ENCODE measurements at regions of chr5 and their contacts with region 1.

Region 1: GRCh38 chr5:42423285-42424165 is at the start of gene GHR:
- DNase-seq: peak; percentile 84
- H3K4me3 ChIP-seq: peak within 1 kb of the TSS; percentile 49 to 81 (median 58)
- H3K27ac ChIP-seq: no peak within 1 kb of the TSS
- H3K4me1 ChIP-seq: peaks cover 17% of the 10 kb centered on the region
- H3K27me3 ChIP-seq: no peaks in the 10 kb centered on the region
- CTCF ChIP-seq: peak; percentile 48 to 75
- total RNA-seq, gene GHR: 2.8 to 5.5 TPM

Region 2: GRCh38 chr5:41856644-41857491 is 566.7 kb before region 1 on chr5:
- CTCF ChIA-PET with region 1: no interaction called
- dilution Hi-C with region 1: no loop called
- in situ Hi-C with region 1: no loop called
- intact Hi-C with region 1: loop called (anchors 5 kb)
- DNase-seq: peak; percentile 47
- H3K4me3 ChIP-seq: no peak overlapping the region
- H3K27ac ChIP-seq: no peak overlapping the region
- H3K4me1 ChIP-seq: no peaks in the 10 kb centered on the region
- H3K27me3 ChIP-seq: no peaks in the 10 kb centered on the region
- CTCF ChIP-seq: peak; percentile 74 to 78

Region 3: GRCh38 chr5:42377496-42377895 is 46.0 kb before region 1 on chr5:
- CTCF ChIA-PET with region 1: no interaction called
- dilution Hi-C with region 1: no loop called
- in situ Hi-C with region 1: no loop called
- intact Hi-C with region 1: no loop called
- DNase-seq: peak; percentile 6
- H3K4me3 ChIP-seq: no peak overlapping the region
- H3K27ac ChIP-seq: no peak overlapping the region
- H3K4me1 ChIP-seq: no peaks in the 10 kb centered on the region
- H3K27me3 ChIP-seq: no peaks in the 10 kb centered on the region
- CTCF ChIP-seq: no peak

Region 4: DNA sequence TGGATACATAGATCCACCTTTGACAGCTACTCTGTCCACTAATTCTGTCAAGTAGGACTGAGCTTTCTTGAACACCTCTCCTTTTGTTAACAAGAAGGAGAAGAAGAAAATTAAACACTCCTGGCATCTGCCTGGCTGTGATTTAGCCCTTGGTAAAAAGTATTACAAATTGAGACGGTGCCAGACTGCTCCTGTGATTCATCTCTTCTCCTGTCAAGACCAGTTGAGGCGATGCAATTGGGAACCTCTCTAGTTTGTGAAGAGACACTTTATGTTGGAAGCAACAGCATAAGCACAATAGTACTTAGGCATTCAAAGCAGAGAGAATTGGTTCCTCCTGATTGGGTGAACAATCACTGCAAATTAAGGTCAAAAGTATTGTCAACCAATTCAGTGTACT is 72.4 kb after region 1 on chr5:
- CTCF ChIA-PET with region 1: interaction called, 3 read pairs
- dilution Hi-C with region 1: no loop called
- in situ Hi-C with region 1: no loop called
- intact Hi-C with region 1: loop called (anchors 5 kb)
- DNase-seq: peak; percentile 70
- H3K4me3 ChIP-seq: no peak overlapping the region
- H3K27ac ChIP-seq: no peak overlapping the region
- H3K4me1 ChIP-seq: peaks cover 12% of the 10 kb centered on the region
- H3K27me3 ChIP-seq: no peaks in the 10 kb centered on the region
- CTCF ChIP-seq: no peak

Region 5: GRCh38 chr5:42636425-42636824 is 212.9 kb after region 1 on chr5:
- CTCF ChIA-PET with region 1: no interaction called
- dilution Hi-C with region 1: no loop called
- in situ Hi-C with region 1: no loop called
- intact Hi-C with region 1: loop called (anchors 1 kb)
- DNase-seq: peak; percentile 9
- H3K4me3 ChIP-seq: no peak overlapping the region
- H3K27ac ChIP-seq: no peak overlapping the region
- H3K4me1 ChIP-seq: peaks cover 12% of the 10 kb centered on the region
- H3K27me3 ChIP-seq: no peaks in the 10 kb centered on the region
- CTCF ChIP-seq: peak; percentile 37 to 57

Region 6: GRCh38 chr5:42656651-42657015 is 233.1 kb after region 1 on chr5:
- CTCF ChIA-PET with region 1: no interaction called
- dilution Hi-C with region 1: no loop called
- in situ Hi-C with region 1: no loop called
- intact Hi-C with region 1: loop called (anchors 1 kb)
- DNase-seq: peak; percentile 4
- H3K4me3 ChIP-seq: peak overlapping the region; percentile 2 to 64 (median 45)
- H3K27ac ChIP-seq: peak overlapping the region; percentile 53
- H3K4me1 ChIP-seq: peaks cover 10% of the 10 kb centered on the region
- H3K27me3 ChIP-seq: no peaks in the 10 kb centered on the region
- CTCF ChIP-seq: peak; percentile 19 to 48

Region 7: DNA sequence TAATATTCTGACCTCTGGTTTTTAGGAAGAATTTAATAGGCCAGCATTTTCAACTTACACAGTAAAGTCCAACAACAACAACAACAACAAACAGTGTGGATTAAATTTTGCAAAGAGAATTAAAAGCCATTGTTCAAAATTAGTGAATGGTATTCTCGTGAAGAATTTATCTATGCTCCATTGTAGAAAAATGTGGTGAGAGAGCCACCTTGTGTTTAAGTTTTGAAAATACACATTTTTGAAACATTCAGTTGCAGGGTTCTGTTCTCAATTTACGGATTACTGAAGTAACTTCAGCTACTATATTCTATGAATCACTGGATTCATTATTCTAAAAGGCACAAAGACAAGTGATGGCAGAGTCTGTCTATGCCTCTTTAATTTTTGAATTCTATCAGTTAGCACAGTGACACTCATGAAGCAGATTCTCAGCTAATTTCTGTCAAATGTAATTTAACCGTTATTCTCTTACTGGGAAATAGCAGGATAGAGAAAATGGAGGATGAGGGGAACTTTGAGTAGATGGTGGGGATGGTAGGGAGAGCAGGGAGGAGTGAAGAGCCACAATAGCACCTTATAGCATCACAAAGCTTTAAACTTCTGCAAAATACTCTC is 344.1 kb after region 1 on chr5:
- CTCF ChIA-PET with region 1: no interaction called
- dilution Hi-C with region 1: no loop called
- in situ Hi-C with region 1: no loop called
- intact Hi-C with region 1: loop called (anchors 5 kb)
- DNase-seq: peak; percentile 17
- H3K4me3 ChIP-seq: no peak overlapping the region
- H3K27ac ChIP-seq: no peak overlapping the region
- H3K4me1 ChIP-seq: no peaks in the 10 kb centered on the region
- H3K27me3 ChIP-seq: no peaks in the 10 kb centered on the region
- CTCF ChIP-seq: peak; percentile 28 to 48